BJ (cell line): ENCODE measurements at regions of chr4 and their contacts with region 1.

Region 1: GRCh38 chr4:80195441-80196140 is 1.7 kb upstream of the PRDM8 start:
- DNase-seq: no peak
- H3K4me3 ChIP-seq: no peak overlapping the region
- H3K27me3 ChIP-seq: no peaks in the 10 kb centered on the region; the same call in 1 of the 2 replicates
- CTCF ChIP-seq: no peak

Region 2: GRCh38 chr4:78684325-78685079 is 1511.1 kb before region 1 on chr4:
- CTCF ChIA-PET with region 1: no interaction called
- POLR2A ChIA-PET with region 1: interaction called, 16 read pairs
- DNase-seq: peak; percentile 9
- H3K4me3 ChIP-seq: no peak overlapping the region
- H3K27me3 ChIP-seq: no peaks in the 10 kb centered on the region
- CTCF ChIP-seq: no peak

Region 3: GRCh38 chr4:80407246-80407645 is 211.7 kb after region 1 on chr4:
- CTCF ChIA-PET with region 1: no interaction called
- POLR2A ChIA-PET with region 1: no interaction called
- DNase-seq: peak; percentile 55
- H3K4me3 ChIP-seq: no peak overlapping the region
- H3K27me3 ChIP-seq: no peaks in the 10 kb centered on the region
- CTCF ChIP-seq: no peak

Region 4: DNA sequence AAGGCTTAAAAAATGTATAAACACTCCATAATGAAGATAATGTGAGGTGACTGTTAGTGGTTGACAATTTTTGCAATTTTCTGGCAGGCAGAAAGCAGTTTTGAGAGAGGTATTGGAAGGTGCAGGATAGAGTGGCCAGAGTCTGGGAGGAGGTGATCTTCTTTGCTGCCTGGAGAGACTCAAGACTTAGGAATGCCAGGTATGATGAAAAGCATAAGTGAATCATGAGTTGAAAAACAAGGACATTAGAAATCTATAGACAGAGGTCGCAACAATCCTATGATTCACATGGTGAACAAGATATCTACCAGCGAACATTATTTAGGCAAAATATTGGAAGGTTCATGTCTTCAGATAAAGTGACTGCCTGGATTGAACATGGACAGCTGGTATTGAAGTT is 258.4 kb after region 1 on chr4:
- CTCF ChIA-PET with region 1: no interaction called
- POLR2A ChIA-PET with region 1: no interaction called
- DNase-seq: no peak
- H3K4me3 ChIP-seq: no peak overlapping the region
- H3K27me3 ChIP-seq: no peaks in the 10 kb centered on the region
- CTCF ChIP-seq: no peak